ENCODE measurements at regions of chr15 and their contacts with region 1.

Region 1: DNA sequence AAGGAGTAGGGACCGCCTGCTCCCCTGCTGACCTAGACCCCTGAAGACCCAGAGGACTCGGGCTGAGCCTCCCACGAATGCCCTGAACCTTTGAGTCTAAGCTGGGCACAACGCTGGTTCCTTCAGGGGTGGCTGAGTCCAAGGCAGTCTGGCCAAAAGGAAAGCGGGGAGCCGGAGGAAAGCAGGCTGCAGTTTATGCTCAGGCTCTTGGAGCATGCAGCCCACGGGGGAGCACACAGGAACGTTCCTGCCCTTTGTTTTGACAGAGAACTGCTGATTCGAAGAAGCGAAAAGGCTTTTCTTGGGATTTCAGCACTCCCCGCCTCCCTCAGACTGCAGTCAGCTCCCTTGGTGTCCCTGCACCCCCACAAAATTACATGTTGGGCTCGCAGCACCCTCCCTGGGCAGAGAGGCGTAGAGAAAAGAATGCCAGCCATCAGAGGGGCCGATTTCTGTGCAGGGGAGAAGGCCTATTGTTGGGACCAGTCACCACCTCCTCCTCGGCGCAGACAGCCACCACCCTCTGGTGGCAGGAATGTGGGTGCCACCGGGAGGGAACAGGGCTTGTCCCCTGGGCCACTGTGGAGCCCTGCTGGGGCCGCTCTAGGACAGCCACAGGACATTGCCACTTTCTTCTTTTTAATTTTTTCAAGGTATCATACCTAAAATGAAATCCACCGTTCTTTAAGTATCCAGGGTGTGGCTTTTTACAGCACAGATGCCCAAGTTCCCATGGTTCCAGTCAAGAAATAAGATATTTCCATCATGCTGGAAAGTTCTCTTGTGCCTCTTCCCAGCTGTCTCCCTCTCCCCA is 72.2 kb downstream of the SMAD6 start:
- DNase-seq: peak; percentile 89
- ATAC-seq: peak; percentile 86 to 96 (median 92)
- H3K4me3 ChIP-seq: no peak overlapping the region
- H3K27ac ChIP-seq: peak overlapping the region in 8 of 10 donors; percentile 59 to 80 (median 72)
- H3K4me1 ChIP-seq: peaks cover 12 to 93% (median 58%) of the 10 kb centered on the region in 9 donors
- H3K27me3 ChIP-seq: no peaks in the 10 kb centered on the region
- CTCF ChIP-seq: peak; percentile 94 to 100 (median 96)

Region 2: GRCh38 chr15:65952425-65953053 is 821.7 kb before region 1 on chr15:
- intact Hi-C with region 1: no loop called
- DNase-seq: peak in 1 of 2 donors; percentile 21
- ATAC-seq: peak in 3 of 8 donors; percentile 25 to 53 (median 47)
- H3K4me3 ChIP-seq: no peak overlapping the region
- H3K27ac ChIP-seq: no peak overlapping the region
- H3K4me1 ChIP-seq: no peaks in the 10 kb centered on the region
- H3K27me3 ChIP-seq: peaks cover 0 to 8% (median 0%) of the 10 kb centered on the region in 7 donors
- CTCF ChIP-seq: no peak

Region 3: GRCh38 chr15:66558300-66558699 is 215.9 kb before region 1 on chr15:
- intact Hi-C with region 1: no loop called
- DNase-seq: no peak
- ATAC-seq: no peak
- H3K4me3 ChIP-seq: no peak overlapping the region
- H3K27ac ChIP-seq: no peak overlapping the region
- H3K4me1 ChIP-seq: no peaks in the 10 kb centered on the region
- H3K27me3 ChIP-seq: no peaks in the 10 kb centered on the region
- CTCF ChIP-seq: no peak

Region 4: DNA sequence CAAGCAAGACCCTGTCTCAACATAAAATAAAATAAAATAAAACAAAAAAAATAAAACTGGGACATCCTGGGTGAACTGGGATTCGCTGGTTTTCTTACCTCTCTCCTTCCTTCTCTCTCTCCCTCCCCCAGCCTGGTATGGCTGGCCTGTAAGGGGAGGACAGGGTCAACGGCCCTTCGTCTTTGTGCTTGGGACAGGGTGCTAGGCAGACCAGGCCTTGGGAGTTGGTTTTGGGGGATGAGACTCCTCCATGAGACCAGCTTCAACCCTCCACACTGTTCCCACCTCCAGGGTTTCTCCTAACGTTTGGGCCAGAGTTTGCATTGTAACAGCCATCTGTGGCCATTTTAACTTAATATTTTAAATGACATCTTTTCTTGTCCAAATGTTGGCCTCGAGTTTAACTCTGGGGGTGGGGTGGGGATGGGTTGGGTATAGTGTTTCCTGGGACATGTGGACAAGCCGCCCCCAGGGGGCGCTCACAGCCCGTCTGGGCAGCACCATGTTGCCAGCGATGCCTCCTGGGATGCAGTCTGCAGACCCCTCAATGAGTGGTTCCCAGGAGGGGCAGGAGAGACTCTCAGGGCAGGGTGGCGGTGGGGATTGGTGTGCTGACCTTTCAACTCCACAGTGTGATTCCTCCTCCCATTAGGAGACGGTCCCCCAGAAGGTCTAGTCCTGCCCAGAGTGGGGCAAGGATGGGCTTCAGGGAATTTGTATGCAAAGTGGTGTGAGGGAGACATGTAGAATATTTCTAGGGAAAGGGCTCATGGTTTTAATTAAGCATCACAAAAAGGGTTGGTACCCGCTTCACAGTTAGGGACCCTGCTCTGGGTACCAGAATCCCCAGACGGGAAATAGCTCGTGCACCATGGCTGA is 170.7 kb before region 1 on chr15:
- intact Hi-C with region 1: loop called in 5 of 10 experiments (anchors 2 to 5 kb)
- DNase-seq: peak; percentile 60 to 71
- ATAC-seq: peak; percentile 68 to 93 (median 84)
- H3K4me3 ChIP-seq: no peak overlapping the region
- H3K27ac ChIP-seq: no peak overlapping the region
- H3K4me1 ChIP-seq: peaks cover 0 to 6% (median 0%) of the 10 kb centered on the region in 9 donors
- H3K27me3 ChIP-seq: no peaks in the 10 kb centered on the region
- CTCF ChIP-seq: peak; percentile 77 to 88 (median 84)

Region 5: DNA sequence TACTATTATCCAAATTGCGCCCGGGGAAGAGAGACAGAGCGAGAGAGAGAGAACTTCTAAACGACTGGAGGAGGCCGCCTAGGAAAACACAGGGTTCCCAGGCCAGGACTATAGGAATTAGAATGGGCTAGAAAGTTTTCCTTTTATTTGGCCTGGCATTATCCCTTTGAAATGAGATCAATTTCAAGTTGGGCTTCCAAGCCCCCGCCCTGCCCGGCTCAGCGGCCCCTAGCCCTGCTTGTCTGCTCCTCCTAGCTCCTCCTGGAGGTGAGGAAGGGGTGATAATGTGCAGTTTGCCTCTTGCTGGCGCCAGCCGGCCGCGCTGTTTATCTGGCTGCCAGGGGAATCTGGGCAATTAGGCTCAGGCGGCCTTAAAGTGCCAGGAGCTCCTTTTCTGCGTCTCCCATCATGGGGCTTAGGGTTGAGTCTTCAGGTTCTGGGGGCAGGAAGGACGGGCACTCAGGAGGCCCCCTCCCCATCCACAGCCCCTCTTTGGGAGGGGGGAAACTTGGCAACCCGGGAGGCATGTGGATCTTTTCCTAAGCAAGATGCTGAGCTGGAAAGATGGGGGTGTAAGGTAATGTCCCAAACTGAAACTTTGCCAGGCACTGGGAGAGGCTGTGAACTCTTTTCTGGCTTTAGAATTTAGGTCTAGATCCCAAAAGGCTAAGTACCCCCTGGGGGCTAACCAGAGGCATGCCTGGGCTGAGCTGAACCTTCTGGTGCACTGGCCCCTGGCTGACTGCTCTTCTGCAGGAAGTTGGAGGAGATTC is 66.7 kb before region 1 on chr15:
- intact Hi-C with region 1: loop called in 8 of 10 experiments (anchors 1 to 10 kb)
- DNase-seq: peak in 1 of 2 donors; percentile 50
- ATAC-seq: peak in 7 of 8 donors; percentile 5 to 71 (median 37)
- H3K4me3 ChIP-seq: peak overlapping the region in 7 of 10 donors; percentile 62 to 85 (median 77)
- H3K27ac ChIP-seq: peak overlapping the region in 9 of 10 donors; percentile 9 to 97 (median 93)
- H3K4me1 ChIP-seq: peaks cover 7 to 78% (median 44%) of the 10 kb centered on the region in 9 donors
- H3K27me3 ChIP-seq: peaks cover 0 to 28% (median 0%) of the 10 kb centered on the region in 7 donors
- CTCF ChIP-seq: peak in 3 of 9 donors; percentile 33 to 37 (median 34)

Region 6: DNA sequence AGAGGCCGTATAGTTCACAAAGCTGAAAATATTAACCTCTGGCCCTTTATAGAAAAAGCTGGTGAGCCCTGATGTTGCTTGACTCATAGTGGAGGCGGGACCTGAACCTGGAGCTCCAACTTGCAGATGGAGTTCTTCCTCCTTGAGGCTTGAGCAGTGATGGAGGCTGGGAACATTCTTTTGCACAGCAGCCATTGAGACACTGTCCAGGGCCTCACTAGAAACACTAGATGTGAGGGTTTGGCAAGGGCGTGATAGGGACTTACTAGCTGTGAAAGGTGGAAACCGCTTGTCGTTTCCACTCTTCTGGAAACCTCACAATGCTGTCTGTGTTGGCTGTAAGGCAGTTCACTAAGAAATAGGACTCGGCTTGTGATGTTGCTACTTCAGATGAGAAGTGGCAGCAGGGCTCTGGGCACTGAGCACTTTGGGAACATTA is 59.6 kb before region 1 on chr15:
- intact Hi-C with region 1: loop called in 4 of 10 experiments (anchors 2 to 10 kb)
- DNase-seq: no peak
- ATAC-seq: no peak
- H3K4me3 ChIP-seq: no peak overlapping the region
- H3K27ac ChIP-seq: no peak overlapping the region
- H3K4me1 ChIP-seq: peaks cover 2 to 77% (median 31%) of the 10 kb centered on the region in 9 donors
- H3K27me3 ChIP-seq: no peaks in the 10 kb centered on the region
- CTCF ChIP-seq: no peak

Region 7: GRCh38 chr15:66730168-66731021 is 43.8 kb before region 1 on chr15:
- intact Hi-C with region 1: loop called in 1 of 10 experiments (anchors 5 kb)
- DNase-seq: no peak
- ATAC-seq: peak in 1 of 8 donors; percentile 38
- H3K4me3 ChIP-seq: no peak overlapping the region
- H3K27ac ChIP-seq: no peak overlapping the region
- H3K4me1 ChIP-seq: peaks cover 6 to 46% (median 24%) of the 10 kb centered on the region in 9 donors
- H3K27me3 ChIP-seq: no peaks in the 10 kb centered on the region
- CTCF ChIP-seq: no peak

Region 8: GRCh38 chr15:66851226-66852071 is 77.2 kb after region 1 on chr15:
- intact Hi-C with region 1: loop called (anchors 1 to 5 kb)
- DNase-seq: peak; percentile 87 to 88
- ATAC-seq: peak; percentile 86 to 94 (median 90)
- H3K4me3 ChIP-seq: peak overlapping the region in 3 of 10 donors; percentile 10 to 23 (median 12)
- H3K27ac ChIP-seq: peak overlapping the region in 8 of 10 donors; percentile 72 to 92 (median 79)
- H3K4me1 ChIP-seq: peaks cover 15 to 38% (median 33%) of the 10 kb centered on the region in 9 donors
- H3K27me3 ChIP-seq: no peaks in the 10 kb centered on the region
- CTCF ChIP-seq: peak; percentile 94 to 99 (median 98)

Region 9: GRCh38 chr15:67013696-67014095 is 239.5 kb after region 1 on chr15:
- intact Hi-C with region 1: no loop called
- DNase-seq: peak; percentile 56 to 81
- ATAC-seq: peak; percentile 82 to 95 (median 90)
- H3K4me3 ChIP-seq: no peak overlapping the region
- H3K27ac ChIP-seq: peak overlapping the region in 8 of 10 donors; percentile 49 to 68 (median 60)
- H3K4me1 ChIP-seq: peaks cover 0 to 35% (median 23%) of the 10 kb centered on the region in 9 donors
- H3K27me3 ChIP-seq: no peaks in the 10 kb centered on the region
- CTCF ChIP-seq: no peak

Measured in heart right ventricle (tissue), 16 donors.